ENCODE measurements at regions of chr11 and their contacts with region 1.

Region 1: GRCh38 chr11:82900277-82901164 is at the start of gene PRCP:
- DNase-seq: peak; percentile 89
- H3K4me3 ChIP-seq: peak within 1 kb of the TSS; percentile 85 to 88 (median 86)
- H3K27ac ChIP-seq: peak within 1 kb of the TSS; percentile 83
- H3K4me1 ChIP-seq: peaks cover 15% of the 10 kb centered on the region
- H3K27me3 ChIP-seq: no peaks in the 10 kb centered on the region
- CTCF ChIP-seq: no peak
- total RNA-seq, gene PRCP: 25.5 to 31.8 TPM

Region 2: GRCh38 chr11:82718307-82718706 is 182.2 kb before region 1 on chr11:
- CTCF ChIA-PET with region 1: no interaction called
- dilution Hi-C with region 1: no loop called
- in situ Hi-C with region 1: no loop called
- intact Hi-C with region 1: loop called (anchors 1 kb)
- DNase-seq: peak; percentile 54
- H3K4me3 ChIP-seq: no peak overlapping the region
- H3K27ac ChIP-seq: no peak overlapping the region
- H3K4me1 ChIP-seq: peaks cover 4% of the 10 kb centered on the region
- H3K27me3 ChIP-seq: no peaks in the 10 kb centered on the region
- CTCF ChIP-seq: peak; percentile 76 to 80

Region 3: GRCh38 chr11:82818409-82819043 is 82.0 kb before region 1 on chr11:
- CTCF ChIA-PET with region 1: no interaction called
- dilution Hi-C with region 1: no loop called
- in situ Hi-C with region 1: no loop called
- intact Hi-C with region 1: no loop called
- DNase-seq: no peak
- H3K4me3 ChIP-seq: no peak overlapping the region
- H3K27ac ChIP-seq: no peak overlapping the region
- H3K4me1 ChIP-seq: no peaks in the 10 kb centered on the region
- H3K27me3 ChIP-seq: no peaks in the 10 kb centered on the region
- CTCF ChIP-seq: no peak

Region 4: GRCh38 chr11:83071567-83072349 is 171.2 kb after region 1 on chr11 and contains the start of gene RAB30:
- CTCF ChIA-PET with region 1: interaction called, 4 read pairs
- dilution Hi-C with region 1: no loop called
- in situ Hi-C with region 1: no loop called
- intact Hi-C with region 1: loop called (anchors 1 kb)
- DNase-seq: peak; percentile 100
- H3K4me3 ChIP-seq: peak within 1 kb of the TSS; percentile 83 to 92 (median 88)
- H3K27ac ChIP-seq: peak within 1 kb of the TSS; percentile 90
- H3K4me1 ChIP-seq: peaks cover 21% of the 10 kb centered on the region
- H3K27me3 ChIP-seq: no peaks in the 10 kb centered on the region
- CTCF ChIP-seq: no peak
- total RNA-seq, gene RAB30: 10.6 to 41.7 TPM

Region 5: GRCh38 chr11:83162377-83162776 is 261.9 kb after region 1 on chr11:
- CTCF ChIA-PET with region 1: no interaction called
- dilution Hi-C with region 1: no loop called
- in situ Hi-C with region 1: loop called in 1 of 2 experiments (anchors 10 kb)
- intact Hi-C with region 1: loop called (anchors 2 kb)
- DNase-seq: no peak
- H3K4me3 ChIP-seq: no peak overlapping the region
- H3K27ac ChIP-seq: no peak overlapping the region
- H3K4me1 ChIP-seq: peaks cover 14% of the 10 kb centered on the region
- H3K27me3 ChIP-seq: no peaks in the 10 kb centered on the region
- CTCF ChIP-seq: no peak

Region 6: DNA sequence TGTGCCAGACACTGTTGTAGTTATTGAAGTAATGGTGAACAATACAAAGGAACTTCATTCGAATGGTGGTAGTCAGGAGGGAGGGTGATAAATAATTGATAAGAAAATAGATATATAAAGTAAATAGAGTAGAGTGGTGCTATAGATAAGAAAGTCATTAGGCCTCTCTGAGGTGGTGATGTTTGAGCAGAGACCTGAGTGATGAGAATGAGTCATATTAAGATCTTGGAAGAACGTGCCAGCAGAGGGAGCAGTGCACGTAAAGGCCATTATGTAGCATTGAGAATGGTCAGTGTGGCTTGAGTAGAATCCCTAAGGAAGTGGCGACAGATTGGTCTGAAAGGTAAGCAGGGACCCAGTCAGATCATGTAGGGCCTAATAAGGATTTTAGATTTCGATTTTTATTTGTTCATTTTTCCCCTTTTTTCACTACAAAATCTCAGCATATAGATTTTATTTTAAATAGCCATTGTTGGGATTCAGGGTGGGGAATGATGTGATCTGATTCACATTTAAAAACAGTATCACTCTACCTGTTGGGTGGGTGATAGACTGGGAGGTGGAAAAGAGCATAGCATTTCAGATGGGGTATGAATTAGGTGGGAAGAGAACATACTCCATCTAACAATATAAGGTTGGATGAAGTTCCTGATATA is 340.9 kb after region 1 on chr11:
- CTCF ChIA-PET with region 1: no interaction called
- dilution Hi-C with region 1: no loop called
- in situ Hi-C with region 1: loop called in 1 of 2 experiments (anchors 10 kb)
- intact Hi-C with region 1: no loop called
- DNase-seq: peak; percentile 59
- H3K4me3 ChIP-seq: no peak overlapping the region
- H3K27ac ChIP-seq: no peak overlapping the region
- H3K4me1 ChIP-seq: no peaks in the 10 kb centered on the region
- H3K27me3 ChIP-seq: no peaks in the 10 kb centered on the region
- CTCF ChIP-seq: peak; percentile 65 to 74

Region 7: GRCh38 chr11:83285771-83286528 is 385.4 kb after region 1 on chr11 and contains the start of gene CCDC90B:
- CTCF ChIA-PET with region 1: no interaction called
- dilution Hi-C with region 1: no loop called
- in situ Hi-C with region 1: no loop called
- intact Hi-C with region 1: loop called (anchors 10 kb)
- DNase-seq: peak; percentile 96
- H3K4me3 ChIP-seq: peak within 1 kb of the TSS; percentile 77 to 92 (median 85)
- H3K27ac ChIP-seq: peak within 1 kb of the TSS; percentile 90
- H3K4me1 ChIP-seq: peaks cover 14% of the 10 kb centered on the region
- H3K27me3 ChIP-seq: no peaks in the 10 kb centered on the region
- CTCF ChIP-seq: peak; percentile 23 to 36
- total RNA-seq, gene CCDC90B: 45.3 to 56.3 TPM

Region 8: GRCh38 chr11:83819933-83820549 is 919.5 kb after region 1 on chr11:
- CTCF ChIA-PET with region 1: no interaction called
- dilution Hi-C with region 1: no loop called
- in situ Hi-C with region 1: loop called in 1 of 2 experiments (anchors 25 kb)
- intact Hi-C with region 1: no loop called
- DNase-seq: peak; percentile 48
- H3K4me3 ChIP-seq: no peak overlapping the region
- H3K27ac ChIP-seq: no peak overlapping the region
- H3K4me1 ChIP-seq: no peaks in the 10 kb centered on the region
- H3K27me3 ChIP-seq: no peaks in the 10 kb centered on the region
- CTCF ChIP-seq: peak; percentile 52 to 60